Activated T-helper 1 cell treated with anti-CD3 and anti-CD28 coated beads, Interleukin-12 subunit alpha, Interleukin-12 subunit beta, Interleukin-2, Interleukin-4 antibody, amounts not matched to agents 30 ng/mL and 10 ng/mL and 1 ng/mL, durations not matched to agents 14 hours and 24 hours and 36 hours (primary cell): ENCODE measurements at regions of chr3 and their contacts with region 1.

Region 1: DNA sequence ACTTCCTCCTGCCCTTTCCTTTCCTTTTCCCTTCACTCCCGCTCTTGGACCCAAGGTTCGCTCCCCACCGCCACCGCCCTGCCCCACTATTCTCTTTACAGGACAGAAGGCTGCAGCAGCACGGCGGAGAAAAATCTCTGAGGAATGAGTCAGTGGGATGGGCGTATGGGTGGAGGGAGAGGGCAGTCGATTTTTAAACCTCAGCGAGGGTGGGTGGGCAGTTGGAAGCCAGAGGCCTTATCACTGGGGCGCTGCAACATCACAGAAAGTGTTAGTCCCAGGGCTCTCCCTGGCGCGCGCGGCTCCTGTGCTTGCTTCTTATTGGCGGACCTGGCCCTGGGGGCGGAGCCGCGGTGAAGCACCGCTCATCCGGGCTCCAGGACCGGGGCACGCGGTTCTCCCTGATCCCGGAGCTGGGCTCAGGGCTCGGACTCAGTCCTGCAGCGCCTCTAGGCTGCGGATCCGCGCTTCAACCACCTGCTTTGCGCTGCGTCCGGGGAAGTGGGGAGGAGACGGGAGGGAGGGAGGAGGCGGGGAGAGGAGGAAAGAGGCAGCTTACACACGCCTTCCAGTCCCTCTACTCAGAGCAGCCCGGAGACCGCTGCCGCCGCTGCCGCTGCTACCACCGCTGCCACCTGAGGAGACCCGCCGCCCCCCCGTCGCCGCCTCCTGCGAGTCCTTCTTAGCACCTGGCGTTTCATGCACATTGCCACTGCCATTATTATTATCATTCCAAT is at the start of gene ALCAM:
- DNase-seq: peak; percentile 80
- H3K4me3 Mint-ChIP-seq: peak within 1 kb of the TSS; percentile 90
- H3K27ac Mint-ChIP-seq: peak within 1 kb of the TSS; percentile 98
- H3K4me1 Mint-ChIP-seq: peaks cover 43% of the 10 kb centered on the region
- H3K27me3 Mint-ChIP-seq: peaks cover 22% of the 10 kb centered on the region
- total RNA-seq, gene ALCAM: 24.9 and 25.2 TPM in 2 replicates

Region 2: DNA sequence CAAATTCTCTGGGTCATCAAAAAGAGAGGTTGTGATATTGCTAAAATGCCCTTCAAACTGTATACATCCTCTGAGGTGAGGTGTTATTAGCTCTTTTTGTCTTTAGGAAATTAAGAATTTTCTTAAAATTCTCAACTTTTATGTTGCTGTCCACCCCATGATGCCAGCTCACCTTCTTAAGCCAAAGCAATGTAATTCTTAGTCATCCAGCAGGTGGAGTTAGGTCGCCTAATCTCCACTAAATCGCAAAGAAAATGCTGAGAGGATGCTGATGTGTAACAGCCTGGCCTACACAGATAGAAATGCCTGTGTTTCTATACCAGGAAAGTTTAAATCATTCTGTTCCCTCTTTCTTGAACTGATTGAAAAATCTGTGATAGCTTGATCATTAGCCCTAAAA is 769.9 kb before region 1 on chr3:
- intact Hi-C with region 1: loop called (anchors 1 kb)
- DNase-seq: no peak
- H3K4me3 Mint-ChIP-seq: no peak overlapping the region
- H3K27ac Mint-ChIP-seq: no peak overlapping the region
- H3K4me1 Mint-ChIP-seq: no peaks in the 10 kb centered on the region
- H3K27me3 Mint-ChIP-seq: no peaks in the 10 kb centered on the region

Region 3: DNA sequence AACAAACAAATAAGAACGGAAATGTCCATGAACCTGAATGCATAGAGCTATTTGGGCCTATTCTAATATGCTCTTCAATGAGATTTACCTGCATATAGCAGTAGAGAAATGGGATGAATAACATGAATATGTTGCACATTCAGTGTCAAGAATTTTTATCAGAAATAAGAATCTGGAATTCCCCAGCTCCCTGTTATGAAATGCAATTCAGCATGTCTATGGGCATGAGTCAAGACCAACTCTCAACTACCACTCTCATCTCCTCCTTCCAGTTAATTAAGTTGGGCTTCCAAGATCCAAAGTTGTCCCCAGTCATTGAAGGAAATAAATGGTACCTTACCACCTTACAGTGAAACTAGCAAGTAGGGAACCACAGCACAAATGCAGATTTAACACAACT is 133.4 kb before region 1 on chr3:
- intact Hi-C with region 1: no loop called
- DNase-seq: no peak
- H3K4me3 Mint-ChIP-seq: no peak overlapping the region
- H3K27ac Mint-ChIP-seq: no peak overlapping the region
- H3K4me1 Mint-ChIP-seq: no peaks in the 10 kb centered on the region
- H3K27me3 Mint-ChIP-seq: peaks cover 2% of the 10 kb centered on the region

Region 4: DNA sequence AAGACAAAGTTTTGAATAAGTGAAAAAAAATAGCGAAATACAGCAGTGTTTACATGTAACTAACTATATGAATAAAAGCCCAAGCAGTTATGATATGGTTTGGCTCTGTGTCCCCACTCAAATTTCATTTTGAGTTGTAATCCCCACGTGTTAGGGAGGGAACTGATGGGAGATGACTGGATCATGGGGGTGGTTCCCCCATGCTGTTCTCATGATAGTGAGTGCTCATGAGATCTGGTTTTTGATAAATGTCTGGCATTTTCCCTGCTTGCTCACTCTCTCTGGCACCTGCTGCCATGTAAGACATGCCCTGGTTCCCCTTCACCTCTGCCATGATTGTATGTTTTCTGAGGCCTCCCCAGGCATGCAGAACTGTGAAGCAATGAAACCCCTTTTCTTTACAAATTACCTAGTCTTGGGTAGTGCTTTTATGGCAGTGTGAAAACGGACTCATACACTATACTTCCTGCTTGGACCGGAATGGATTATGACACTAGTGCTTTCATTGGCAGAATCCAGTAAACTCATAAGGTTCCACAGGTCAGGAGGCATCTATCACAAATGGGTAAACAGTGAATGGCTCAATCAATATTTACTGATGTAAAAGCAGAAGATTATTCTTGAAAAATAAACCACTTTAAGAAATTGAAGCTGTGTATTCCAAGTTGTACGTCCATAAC is 310.3 kb after region 1 on chr3:
- intact Hi-C with region 1: loop called (anchors 10 kb)
- DNase-seq: no peak
- H3K4me3 Mint-ChIP-seq: peak overlapping the region; percentile 1
- H3K27ac Mint-ChIP-seq: peak overlapping the region; percentile 85
- H3K4me1 Mint-ChIP-seq: peaks cover 36% of the 10 kb centered on the region
- H3K27me3 Mint-ChIP-seq: no peaks in the 10 kb centered on the region

Region 5: DNA sequence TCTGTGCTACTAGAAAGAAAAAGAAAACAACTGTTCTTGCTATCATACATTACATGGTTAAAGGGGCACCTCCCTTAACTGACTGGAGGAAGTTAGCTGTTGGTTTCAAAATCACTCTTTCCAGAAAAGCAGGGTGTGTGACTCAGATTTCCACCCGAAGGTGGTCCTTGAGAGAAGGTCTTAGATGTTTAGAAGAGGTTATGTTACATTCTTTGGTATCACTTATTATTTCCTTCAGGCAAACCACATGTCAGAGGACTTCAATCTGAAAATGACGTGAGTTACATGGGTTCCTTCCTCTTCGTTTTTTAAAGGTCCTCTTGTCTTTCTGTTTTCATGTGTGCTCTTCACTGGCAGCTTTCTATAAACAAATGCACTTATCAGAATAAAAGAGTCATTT is 810.2 kb after region 1 on chr3:
- intact Hi-C with region 1: loop called (anchors 2 kb)
- DNase-seq: peak; percentile 68
- H3K4me3 Mint-ChIP-seq: peak overlapping the region; percentile 75
- H3K27ac Mint-ChIP-seq: peak overlapping the region; percentile 92
- H3K4me1 Mint-ChIP-seq: peaks cover 70% of the 10 kb centered on the region
- H3K27me3 Mint-ChIP-seq: no peaks in the 10 kb centered on the region

Region 6: DNA sequence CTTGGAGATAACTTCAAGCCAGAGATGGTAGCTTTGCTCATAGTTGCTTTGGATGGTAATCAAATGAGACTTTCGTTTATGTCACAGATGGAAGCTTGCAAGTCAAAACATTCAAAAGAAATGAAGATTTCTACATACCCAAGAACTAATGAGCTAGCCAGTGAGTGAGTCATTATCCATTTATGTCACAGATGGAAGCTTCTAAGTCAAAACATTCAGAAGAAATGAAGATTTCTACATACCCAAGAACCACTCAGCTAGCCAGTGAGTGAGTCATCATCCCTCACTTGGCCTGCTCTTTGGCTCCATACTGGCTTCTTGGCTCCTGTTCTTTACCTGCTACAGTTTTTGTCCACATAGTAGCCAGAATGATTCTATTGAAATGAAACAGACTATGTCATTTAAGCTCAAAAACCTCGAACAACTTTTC is 1062.1 kb after region 1 on chr3:
- intact Hi-C with region 1: loop called (anchors 1 kb)
- DNase-seq: no peak
- H3K4me3 Mint-ChIP-seq: no peak overlapping the region
- H3K27ac Mint-ChIP-seq: peak overlapping the region; percentile 93
- H3K4me1 Mint-ChIP-seq: peaks cover 57% of the 10 kb centered on the region
- H3K27me3 Mint-ChIP-seq: no peaks in the 10 kb centered on the region

Region 7: GRCh38 chr3:107235928-107236315 is 1869.4 kb after region 1 on chr3:
- intact Hi-C with region 1: loop called (anchors 5 kb)
- DNase-seq: peak; percentile 44
- H3K4me3 Mint-ChIP-seq: peak overlapping the region; percentile 48
- H3K27ac Mint-ChIP-seq: no peak overlapping the region
- H3K4me1 Mint-ChIP-seq: peaks cover 11% of the 10 kb centered on the region
- H3K27me3 Mint-ChIP-seq: peaks cover 19% of the 10 kb centered on the region